Naive thymus-derived CD4-positive, alpha-beta T cell (primary cell): ENCODE measurements at regions of chr3 and their contacts with region 1.

Region 1: GRCh38 chr3:46368569-46368968 is 2.2 kb upstream of the CCR5 start:
- DNase-seq: peak in 4 of 9 donors; percentile 14 to 37 (median 20)
- ATAC-seq: peak; percentile 90
- H3K4me3 ChIP-seq: no peak overlapping the region
- H3K4me3 Mint-ChIP-seq: peak overlapping the region in 4 of 10 donors; percentile 3 to 26 (median 21)
- H3K27ac ChIP-seq: no peak overlapping the region
- H3K27ac Mint-ChIP-seq: peak overlapping the region in 3 of 9 donors; percentile 24 to 65 (median 57)
- H3K4me1 ChIP-seq: peaks cover 8 to 55% of the 10 kb centered on the region in 2 donors
- H3K4me1 Mint-ChIP-seq: peaks cover 6 to 63% (median 20%) of the 10 kb centered on the region in 7 donors
- H3K27me3 ChIP-seq: no peaks in the 10 kb centered on the region
- H3K27me3 Mint-ChIP-seq: peaks cover 0 to 39% (median 0%) of the 10 kb centered on the region in 5 donors

Region 2: GRCh38 chr3:45938864-45939263 is 429.7 kb before region 1 on chr3:
- CTCF ChIA-PET with region 1: interaction called, 4 read pairs
- POLR2A ChIA-PET with region 1: no interaction called
- intact Hi-C with region 1: loop called in 1 of 2 experiments (anchors 2 kb)
- DNase-seq: peak; percentile 58 to 84 (median 79)
- ATAC-seq: peak; percentile 92
- H3K4me3 ChIP-seq: no peak overlapping the region
- H3K4me3 Mint-ChIP-seq: no peak overlapping the region
- H3K27ac ChIP-seq: no peak overlapping the region
- H3K27ac Mint-ChIP-seq: peak overlapping the region in 1 of 9 donors; percentile 3
- H3K4me1 ChIP-seq: peaks cover 15 to 32% of the 10 kb centered on the region in 2 donors
- H3K4me1 Mint-ChIP-seq: peaks cover 21 to 44% (median 30%) of the 10 kb centered on the region in 7 donors
- H3K27me3 ChIP-seq: no peaks in the 10 kb centered on the region
- H3K27me3 Mint-ChIP-seq: no peaks in the 10 kb centered on the region

Region 3: GRCh38 chr3:46098319-46098761 is 270.2 kb before region 1 on chr3:
- CTCF ChIA-PET with region 1: no interaction called
- POLR2A ChIA-PET with region 1: interaction called, 3 read pairs
- intact Hi-C with region 1: loop called in 1 of 2 experiments (anchors 2 kb)
- DNase-seq: peak in 7 of 9 donors; percentile 30 to 63 (median 52)
- ATAC-seq: peak; percentile 70
- H3K4me3 ChIP-seq: no peak overlapping the region
- H3K4me3 Mint-ChIP-seq: peak overlapping the region; percentile 30 to 80 (median 71)
- H3K27ac ChIP-seq: no peak overlapping the region
- H3K27ac Mint-ChIP-seq: peak overlapping the region; percentile 22 to 98 (median 75)
- H3K4me1 ChIP-seq: peaks cover 25 to 36% of the 10 kb centered on the region in 2 donors
- H3K4me1 Mint-ChIP-seq: peaks cover 28 to 73% (median 35%) of the 10 kb centered on the region in 7 donors
- H3K27me3 ChIP-seq: no peaks in the 10 kb centered on the region
- H3K27me3 Mint-ChIP-seq: peaks cover 0 to 7% (median 0%) of the 10 kb centered on the region in 5 donors

Region 4: DNA sequence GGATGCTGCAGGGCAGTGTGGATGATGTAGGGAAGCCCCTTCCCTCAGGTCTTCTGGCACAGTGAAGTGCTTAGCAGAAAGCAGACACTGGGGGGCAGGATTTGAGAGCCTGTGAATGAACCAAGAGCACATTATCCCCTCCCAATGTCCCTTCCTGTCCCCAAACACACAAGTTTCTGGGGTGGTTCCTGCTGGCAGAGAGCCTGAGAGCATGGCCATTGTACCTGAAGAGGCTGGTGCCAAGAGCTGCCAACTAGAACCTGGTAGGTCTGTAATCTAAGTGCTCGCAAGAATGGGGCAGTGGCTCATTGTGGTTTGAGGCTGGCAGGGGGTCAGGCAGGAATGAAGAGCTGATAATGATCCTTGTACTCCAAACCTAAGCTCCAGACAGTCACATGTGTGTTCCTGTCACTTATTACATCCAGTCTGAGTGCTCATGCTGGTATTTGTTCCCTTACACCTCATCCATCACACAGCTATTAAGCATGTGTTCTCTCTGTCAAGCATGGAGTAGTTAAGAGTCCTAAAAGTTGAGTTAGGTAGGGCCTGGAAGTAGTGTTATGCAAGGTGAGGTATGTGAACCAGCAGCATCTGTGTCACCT is 153.7 kb before region 1 on chr3:
- CTCF ChIA-PET with region 1: no interaction called
- POLR2A ChIA-PET with region 1: no interaction called
- intact Hi-C with region 1: loop called in 1 of 2 experiments (anchors 1 kb)
- DNase-seq: no peak
- ATAC-seq: peak; percentile 27
- H3K4me3 ChIP-seq: no peak overlapping the region
- H3K4me3 Mint-ChIP-seq: no peak overlapping the region
- H3K27ac ChIP-seq: no peak overlapping the region
- H3K27ac Mint-ChIP-seq: no peak overlapping the region
- H3K4me1 ChIP-seq: peaks cover 14 to 26% of the 10 kb centered on the region in 2 donors
- H3K4me1 Mint-ChIP-seq: peaks cover 0 to 27% (median 0%) of the 10 kb centered on the region in 7 donors
- H3K27me3 ChIP-seq: no peaks in the 10 kb centered on the region
- H3K27me3 Mint-ChIP-seq: peaks cover 0 to 31% (median 0%) of the 10 kb centered on the region in 5 donors

Region 5: GRCh38 chr3:46276502-46277099 is 92.0 kb before region 1 on chr3:
- CTCF ChIA-PET with region 1: interaction called, 80 read pairs
- POLR2A ChIA-PET with region 1: no interaction called
- intact Hi-C with region 1: loop called (anchors 1 kb)
- DNase-seq: peak; percentile 32 to 71 (median 58)
- ATAC-seq: peak; percentile 93
- H3K4me3 ChIP-seq: no peak overlapping the region
- H3K4me3 Mint-ChIP-seq: peak overlapping the region in 1 of 10 donors; percentile 31
- H3K27ac ChIP-seq: no peak overlapping the region
- H3K27ac Mint-ChIP-seq: peak overlapping the region in 1 of 9 donors; percentile 80
- H3K4me1 ChIP-seq: peaks cover 5 to 43% of the 10 kb centered on the region in 2 donors
- H3K4me1 Mint-ChIP-seq: peaks cover 16 to 54% (median 22%) of the 10 kb centered on the region in 7 donors
- H3K27me3 ChIP-seq: no peaks in the 10 kb centered on the region
- H3K27me3 Mint-ChIP-seq: peaks cover 0 to 39% (median 0%) of the 10 kb centered on the region in 5 donors

Region 6: DNA sequence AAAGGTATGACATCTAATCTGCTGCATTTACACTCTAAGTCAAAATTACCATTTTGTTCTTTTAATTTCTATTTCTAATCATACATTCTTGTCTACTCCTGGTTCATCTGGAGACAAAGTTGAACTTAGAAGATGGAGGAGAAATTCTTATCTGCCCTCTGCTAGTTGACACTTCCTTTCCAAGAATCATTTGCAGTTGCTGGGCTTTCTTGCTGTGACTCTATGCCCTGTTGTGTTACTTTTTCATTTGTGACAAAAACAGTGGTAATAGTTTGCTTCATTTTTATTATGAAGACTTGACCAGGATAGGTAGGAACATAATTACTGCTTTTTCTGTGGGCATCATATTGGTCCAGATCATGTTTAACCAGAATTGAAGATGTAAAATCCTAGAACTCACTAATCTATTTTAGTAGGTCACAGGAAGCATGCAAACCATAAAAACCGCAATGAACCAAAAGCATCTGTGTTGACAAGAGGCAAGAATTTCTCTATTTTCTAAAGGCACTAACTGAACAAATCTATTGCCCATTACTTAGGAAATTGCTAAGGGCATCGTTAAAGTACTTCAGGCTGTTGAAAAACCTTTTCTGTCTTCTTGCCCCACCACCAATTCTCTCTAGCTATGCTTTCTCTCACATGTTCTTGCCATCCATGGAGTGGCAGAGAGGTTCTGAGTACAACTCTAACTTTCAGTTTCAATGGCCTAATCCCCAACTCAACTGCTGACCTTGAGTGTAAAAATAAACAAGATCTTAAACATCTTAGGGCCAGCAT is 18.9 kb before region 1 on chr3:
- CTCF ChIA-PET with region 1: interaction called, 16 read pairs
- POLR2A ChIA-PET with region 1: interaction called, 4 read pairs
- intact Hi-C with region 1: loop called (anchors 2 kb)
- DNase-seq: peak in 6 of 9 donors; percentile 17 to 44 (median 25)
- ATAC-seq: peak; percentile 32
- H3K4me3 ChIP-seq: peak overlapping the region; percentile 7
- H3K4me3 Mint-ChIP-seq: peak overlapping the region in 9 of 10 donors; percentile 57 to 82 (median 74)
- H3K27ac ChIP-seq: no peak overlapping the region
- H3K27ac Mint-ChIP-seq: peak overlapping the region; percentile 4 to 92 (median 71)
- H3K4me1 ChIP-seq: peaks cover 42 to 52% of the 10 kb centered on the region in 2 donors
- H3K4me1 Mint-ChIP-seq: peaks cover 51 to 71% (median 71%) of the 10 kb centered on the region in 7 donors
- H3K27me3 ChIP-seq: no peaks in the 10 kb centered on the region
- H3K27me3 Mint-ChIP-seq: peaks cover 0 to 27% (median 0%) of the 10 kb centered on the region in 5 donors

Region 7: GRCh38 chr3:46674031-46674845 is 305.7 kb after region 1 on chr3:
- CTCF ChIA-PET with region 1: no interaction called
- POLR2A ChIA-PET with region 1: no interaction called
- intact Hi-C with region 1: no loop called
- DNase-seq: no peak
- ATAC-seq: no peak
- H3K4me3 ChIP-seq: no peak overlapping the region
- H3K4me3 Mint-ChIP-seq: no peak overlapping the region
- H3K27ac ChIP-seq: no peak overlapping the region
- H3K27ac Mint-ChIP-seq: no peak overlapping the region
- H3K4me1 ChIP-seq: no peaks in the 10 kb centered on the region
- H3K4me1 Mint-ChIP-seq: no peaks in the 10 kb centered on the region
- H3K27me3 ChIP-seq: no peaks in the 10 kb centered on the region
- H3K27me3 Mint-ChIP-seq: peaks cover 0 to 3% (median 0%) of the 10 kb centered on the region in 5 donors